ENCODE measurements at regions of chr15 and their contacts with region 1.

Region 1: GRCh38 chr15:45126535-45127158 is 3.0 kb downstream of the DUOXA1 start:
- DNase-seq: peak; percentile 35
- H3K4me3 ChIP-seq: no peak overlapping the region
- H3K27ac ChIP-seq: no peak overlapping the region
- H3K4me1 ChIP-seq: peaks cover 21% of the 10 kb centered on the region
- H3K27me3 ChIP-seq: no peaks in the 10 kb centered on the region
- CTCF ChIP-seq: peak; percentile 85 to 90

Region 2: DNA sequence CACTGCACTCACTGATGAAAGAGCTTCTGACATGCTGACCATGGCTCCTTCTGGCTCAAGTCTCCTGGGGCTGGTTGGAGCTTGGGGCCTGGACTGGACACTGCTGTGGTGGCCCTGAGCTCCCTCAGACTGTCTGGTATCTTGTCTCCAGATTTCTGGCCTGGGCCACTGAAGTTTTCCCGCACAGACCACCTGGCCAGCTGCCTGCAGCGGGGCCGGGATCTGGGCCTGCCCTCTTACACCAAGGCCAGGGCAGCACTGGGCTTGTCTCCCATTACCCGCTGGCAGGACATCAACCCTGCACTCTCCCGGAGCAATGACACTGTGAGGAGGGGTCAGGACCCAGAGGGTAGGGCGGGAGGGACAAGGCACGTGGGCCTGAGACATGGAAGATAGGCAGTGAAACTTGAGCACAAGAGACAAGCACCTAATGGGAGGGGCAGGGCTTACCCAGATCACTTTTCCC is 12.7 kb after region 1 on chr15:
- CTCF ChIA-PET with region 1: no interaction called
- dilution Hi-C with region 1: no loop called
- in situ Hi-C with region 1: no loop called
- intact Hi-C with region 1: no loop called
- DNase-seq: no peak
- H3K4me3 ChIP-seq: no peak overlapping the region
- H3K27ac ChIP-seq: no peak overlapping the region
- H3K4me1 ChIP-seq: no peaks in the 10 kb centered on the region
- H3K27me3 ChIP-seq: no peaks in the 10 kb centered on the region
- CTCF ChIP-seq: no peak

Region 3: GRCh38 chr15:45166834-45167630 is 40.4 kb after region 1 on chr15:
- CTCF ChIA-PET with region 1: interaction called, 16 read pairs
- dilution Hi-C with region 1: loop called (anchors 5 kb)
- in situ Hi-C with region 1: no loop called
- intact Hi-C with region 1: loop called (anchors 1 kb)
- DNase-seq: peak; percentile 44
- H3K4me3 ChIP-seq: peak overlapping the region; percentile 50 to 58 (median 54)
- H3K27ac ChIP-seq: peak overlapping the region; percentile 35
- H3K4me1 ChIP-seq: peaks cover 22% of the 10 kb centered on the region
- H3K27me3 ChIP-seq: no peaks in the 10 kb centered on the region
- CTCF ChIP-seq: peak; percentile 42 to 65

Region 4: GRCh38 chr15:45221967-45222366 is 95.3 kb after region 1 on chr15:
- CTCF ChIA-PET with region 1: no interaction called
- dilution Hi-C with region 1: loop called (anchors 5 kb)
- in situ Hi-C with region 1: no loop called
- intact Hi-C with region 1: no loop called
- DNase-seq: no peak
- H3K4me3 ChIP-seq: no peak overlapping the region
- H3K27ac ChIP-seq: no peak overlapping the region
- H3K4me1 ChIP-seq: no peaks in the 10 kb centered on the region
- H3K27me3 ChIP-seq: peaks cover 2% of the 10 kb centered on the region
- CTCF ChIP-seq: no peak

Measured in mammary epithelial cell (primary cell).